WTC11 (cell line): ENCODE measurements at regions of chr10 and their contacts with region 1.

Region 1: GRCh38 chr10:132421392-132421877 is 24.4 kb downstream of the PWWP2B start:
- DNase-seq: no peak
- ATAC-seq: no peak
- H3K4me3 Mint-ChIP-seq: no peak overlapping the region
- H3K27ac Mint-ChIP-seq: no peak overlapping the region
- H3K4me1 Mint-ChIP-seq: peaks cover 20% of the 10 kb centered on the region
- H3K27me3 Mint-ChIP-seq: no peaks in the 10 kb centered on the region
- CTCF ChIP-seq: no peak

Region 2: DNA sequence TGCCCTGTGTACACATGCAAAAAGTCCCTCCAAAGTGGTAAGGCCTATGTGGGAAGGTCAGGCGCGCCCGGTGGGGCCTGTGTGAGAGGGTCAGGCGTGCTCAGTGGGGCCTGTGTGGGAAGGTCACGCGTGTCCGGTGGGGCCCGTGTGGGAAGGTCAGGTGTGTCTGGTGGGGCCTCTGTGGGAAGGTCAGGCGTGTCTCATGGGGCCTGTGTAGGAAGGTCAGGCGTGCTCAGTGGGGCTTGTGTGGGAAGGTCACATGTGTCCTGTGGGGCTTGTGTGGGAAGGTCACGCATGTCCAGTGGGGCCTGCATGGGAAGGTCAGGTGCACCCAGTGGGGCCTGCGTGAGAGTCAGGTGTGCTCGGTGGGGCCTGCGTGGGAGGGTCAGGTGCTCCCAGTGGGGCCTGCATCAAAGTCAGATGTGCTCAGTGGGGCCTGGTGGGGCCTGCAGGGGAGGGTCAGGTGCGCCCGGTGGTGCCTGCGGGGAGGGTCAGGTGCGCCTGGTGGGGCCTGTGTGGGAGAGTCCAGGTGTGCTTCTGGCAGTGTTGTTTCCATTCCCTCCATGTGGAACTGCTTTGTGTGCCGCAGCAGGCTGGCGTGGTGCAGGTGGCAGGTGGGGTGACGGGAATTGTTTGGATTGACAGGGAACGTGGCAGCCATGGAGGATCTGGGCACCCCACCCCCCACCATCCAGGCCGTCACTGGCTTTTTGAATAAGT is 74.1 kb before region 1 on chr10:
- CTCF ChIA-PET with region 1: no interaction called
- POLR2A ChIA-PET with region 1: no interaction called
- DNase-seq: no peak
- ATAC-seq: no peak
- H3K4me3 Mint-ChIP-seq: no peak overlapping the region
- H3K27ac Mint-ChIP-seq: peak overlapping the region; percentile 71; the same call in 1 of the 2 replicates
- H3K4me1 Mint-ChIP-seq: no peaks in the 10 kb centered on the region
- H3K27me3 Mint-ChIP-seq: peaks cover 7% of the 10 kb centered on the region
- CTCF ChIP-seq: no peak

Region 3: GRCh38 chr10:132407243-132407806 is 14.1 kb before region 1 on chr10:
- CTCF ChIA-PET with region 1: interaction called, 63 read pairs
- POLR2A ChIA-PET with region 1: interaction called, 9 read pairs
- DNase-seq: no peak
- ATAC-seq: no peak
- H3K4me3 Mint-ChIP-seq: peak overlapping the region; percentile 53
- H3K27ac Mint-ChIP-seq: peak overlapping the region; percentile 99
- H3K4me1 Mint-ChIP-seq: peaks cover 45% of the 10 kb centered on the region
- H3K27me3 Mint-ChIP-seq: no peaks in the 10 kb centered on the region
- CTCF ChIP-seq: no peak

Region 4: DNA sequence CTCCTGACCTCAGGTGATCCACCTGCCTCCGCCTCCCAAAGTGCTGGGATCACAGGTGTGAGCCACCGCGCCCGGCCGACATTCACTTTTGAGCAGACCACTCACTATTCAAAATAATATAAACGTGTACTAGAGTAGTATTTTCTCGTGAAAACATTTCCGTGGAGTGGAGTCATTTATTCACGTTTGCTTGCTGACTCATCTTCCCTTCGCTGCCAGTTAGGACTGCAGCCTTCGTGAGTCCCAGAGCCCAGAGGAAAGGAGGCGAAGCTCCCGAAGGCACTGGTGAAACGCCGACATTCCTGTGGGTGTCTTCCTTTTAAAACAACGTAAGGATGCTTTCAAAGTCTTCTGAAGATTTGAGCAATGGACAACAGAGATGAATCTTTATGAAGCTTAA is 105.2 kb after region 1 on chr10:
- CTCF ChIA-PET with region 1: no interaction called
- POLR2A ChIA-PET with region 1: no interaction called
- DNase-seq: peak; percentile 3
- ATAC-seq: no peak
- H3K4me3 Mint-ChIP-seq: no peak overlapping the region
- H3K27ac Mint-ChIP-seq: no peak overlapping the region
- H3K4me1 Mint-ChIP-seq: no peaks in the 10 kb centered on the region
- H3K27me3 Mint-ChIP-seq: peaks cover 44% of the 10 kb centered on the region
- CTCF ChIP-seq: no peak